Vagina (tissue), 2 donors: ENCODE measurements at regions of chr10 and their contacts with region 1.

Region 1: DNA sequence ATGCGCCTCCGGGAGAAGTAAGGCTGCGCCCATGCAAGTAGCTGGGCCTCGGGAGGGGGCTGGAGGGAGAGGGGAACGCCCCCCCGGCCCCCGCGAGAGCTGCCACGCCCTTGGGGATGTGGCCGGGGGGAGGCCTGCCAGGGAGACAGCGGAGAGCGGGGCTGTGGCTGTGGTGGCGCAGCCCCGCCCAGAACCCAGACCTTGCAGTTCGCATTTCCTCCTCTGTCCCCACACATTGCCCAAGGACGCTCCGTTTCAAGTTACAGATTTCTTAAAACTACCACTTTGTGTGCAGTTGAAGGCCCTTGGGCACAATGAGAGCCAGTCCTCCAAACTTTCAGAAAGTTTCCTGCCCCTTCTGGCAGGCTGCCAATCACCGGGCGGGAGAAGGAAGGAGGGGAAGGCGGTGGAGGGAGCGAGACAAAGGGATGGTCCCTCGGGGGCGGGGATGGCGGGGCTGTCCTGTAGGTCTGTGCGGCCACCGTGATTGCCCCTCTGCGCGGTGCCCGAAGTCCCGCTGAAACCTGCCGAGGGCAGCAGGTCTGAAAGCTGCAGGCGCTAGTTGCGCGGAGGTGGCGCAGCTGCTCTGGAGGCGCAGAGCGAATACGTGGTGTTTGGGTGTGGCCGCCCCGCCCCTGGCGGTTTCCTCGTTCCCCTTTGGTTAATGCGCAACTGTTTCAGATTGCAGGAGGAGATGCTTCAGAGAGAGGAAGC is 2.1 kb downstream of the VIM start:
- DNase-seq: peak in 1 of 2 donors; percentile 91
- H3K4me3 ChIP-seq: peak overlapping the region; percentile 80 to 95
- H3K27ac ChIP-seq: peak overlapping the region; percentile 99
- H3K4me1 ChIP-seq: peaks cover 67% of the 10 kb centered on the region
- H3K27me3 ChIP-seq: no peaks in the 10 kb centered on the region
- CTCF ChIP-seq: no peak
- POLR2A ChIP-seq: peak in 1 of 2 donors; percentile 39

Region 2: DNA sequence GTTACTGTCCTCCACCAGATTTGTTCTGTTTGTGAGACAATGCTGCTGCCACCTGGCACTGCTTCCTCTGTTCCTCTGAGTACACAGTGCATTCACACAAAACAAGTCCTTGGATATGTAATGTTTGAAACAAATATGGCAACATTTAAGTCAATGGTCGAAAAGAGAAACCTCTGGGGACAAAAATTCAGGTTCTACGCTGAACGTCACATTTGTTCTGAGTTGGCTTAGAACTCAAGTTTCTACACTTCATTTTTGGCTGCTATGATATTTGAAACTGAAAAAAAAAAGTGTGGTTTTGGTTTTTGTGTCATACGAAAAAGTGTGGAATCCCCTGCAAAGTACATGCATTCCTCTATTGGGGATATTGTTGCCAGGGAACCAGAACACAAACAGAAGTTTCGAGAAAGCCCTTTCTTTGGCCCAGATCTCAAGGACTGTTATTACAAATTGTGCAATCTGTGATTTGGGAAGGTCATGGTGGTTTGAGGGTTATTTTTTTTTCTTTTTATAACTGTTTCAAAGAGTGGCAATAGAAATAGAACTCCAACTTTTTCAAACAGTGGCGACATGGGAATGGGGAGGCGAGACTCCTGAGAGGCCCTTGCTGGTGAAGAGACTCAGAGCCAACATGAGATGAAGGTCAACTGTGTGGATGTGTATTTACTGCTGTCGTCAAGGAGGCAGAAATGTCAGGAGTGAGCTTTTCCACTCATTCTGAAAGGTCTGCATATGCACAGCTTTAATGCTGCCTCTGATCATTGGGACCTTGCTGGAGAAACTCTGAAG is 228.0 kb before region 1 on chr10:
- intact Hi-C with region 1: loop called (anchors 5 kb)
- DNase-seq: no peak
- H3K4me3 ChIP-seq: no peak overlapping the region
- H3K27ac ChIP-seq: peak overlapping the region; percentile 69
- H3K4me1 ChIP-seq: peaks cover 13% of the 10 kb centered on the region
- H3K27me3 ChIP-seq: no peaks in the 10 kb centered on the region
- CTCF ChIP-seq: no peak
- POLR2A ChIP-seq: no peak

Region 3: GRCh38 chr10:17200912-17201793 is 29.0 kb before region 1 on chr10 and contains the start of gene TRDMT1:
- intact Hi-C with region 1: loop called (anchors 1 kb)
- DNase-seq: peak in 1 of 2 donors; percentile 92
- H3K4me3 ChIP-seq: peak within 1 kb of the TSS; percentile 64 to 68
- H3K27ac ChIP-seq: peak within 1 kb of the TSS; percentile 92
- H3K4me1 ChIP-seq: peaks cover 25% of the 10 kb centered on the region
- H3K27me3 ChIP-seq: no peaks in the 10 kb centered on the region
- CTCF ChIP-seq: no peak
- POLR2A ChIP-seq: peak in 1 of 2 donors; percentile 43
- total RNA-seq, gene TRDMT1: 6.1 TPM